H1 (cell line): ENCODE measurements at regions of chr1 and their contacts with region 1.

Region 1: GRCh38 chr1:37723390-37724078 is 31.2 kb downstream of the CDCA8 start:
- DNase-seq: no peak
- H3K4me3 ChIP-seq: no peak overlapping the region
- H3K27ac ChIP-seq: no peak overlapping the region
- H3K4me1 ChIP-seq: peaks cover 0 to 7% (median 4%) of the 10 kb centered on the region in 4 experiments; a peak in 3 of 7 replicates
- H3K27me3 ChIP-seq: no peaks in the 10 kb centered on the region
- CTCF ChIP-seq: no peak
- EP300 ChIP-seq: no peak
- POLR2A ChIP-seq: no peak
- RAD21 ChIP-seq: no peak

Region 2: GRCh38 chr1:37612200-37612599 is 111.3 kb before region 1 on chr1:
- CTCF ChIA-PET with region 1: no interaction called
- POLR2A ChIA-PET with region 1: no interaction called
- DNase-seq: no peak
- H3K4me3 ChIP-seq: no peak overlapping the region
- H3K27ac ChIP-seq: no peak overlapping the region
- H3K4me1 ChIP-seq: no peaks in the 10 kb centered on the region
- H3K27me3 ChIP-seq: peaks cover 0 to 23% (median 11%) of the 10 kb centered on the region in 4 experiments; a peak in 4 of 7 replicates
- CTCF ChIP-seq: no peak
- EP300 ChIP-seq: no peak
- POLR2A ChIP-seq: no peak
- RAD21 ChIP-seq: no peak

Region 3: GRCh38 chr1:37764414-37764825 is 40.9 kb after region 1 on chr1:
- CTCF ChIA-PET with region 1: interaction called, 11 read pairs
- POLR2A ChIA-PET with region 1: no interaction called
- DNase-seq: peak in 1 of 2 experiments; percentile 94
- H3K4me3 ChIP-seq: peak overlapping the region in 3 of 4 experiments; percentile 42 to 57 (median 47); a peak in 6 of 8 replicates
- H3K27ac ChIP-seq: no peak overlapping the region
- H3K4me1 ChIP-seq: peaks cover 6 to 13% (median 10%) of the 10 kb centered on the region in 4 experiments; a peak in 6 of 7 replicates
- H3K27me3 ChIP-seq: peaks cover 15 to 74% (median 59%) of the 10 kb centered on the region in 4 experiments
- CTCF ChIP-seq: no peak
- EP300 ChIP-seq: no peak
- POLR2A ChIP-seq: no peak
- RAD21 ChIP-seq: 0 out of 4 replicates have a peak, but pooled peaks of 1 of the 2 experiments have one; percentile 9